ENCODE measurements at regions of chr9 and their contacts with region 1.

Region 1: DNA sequence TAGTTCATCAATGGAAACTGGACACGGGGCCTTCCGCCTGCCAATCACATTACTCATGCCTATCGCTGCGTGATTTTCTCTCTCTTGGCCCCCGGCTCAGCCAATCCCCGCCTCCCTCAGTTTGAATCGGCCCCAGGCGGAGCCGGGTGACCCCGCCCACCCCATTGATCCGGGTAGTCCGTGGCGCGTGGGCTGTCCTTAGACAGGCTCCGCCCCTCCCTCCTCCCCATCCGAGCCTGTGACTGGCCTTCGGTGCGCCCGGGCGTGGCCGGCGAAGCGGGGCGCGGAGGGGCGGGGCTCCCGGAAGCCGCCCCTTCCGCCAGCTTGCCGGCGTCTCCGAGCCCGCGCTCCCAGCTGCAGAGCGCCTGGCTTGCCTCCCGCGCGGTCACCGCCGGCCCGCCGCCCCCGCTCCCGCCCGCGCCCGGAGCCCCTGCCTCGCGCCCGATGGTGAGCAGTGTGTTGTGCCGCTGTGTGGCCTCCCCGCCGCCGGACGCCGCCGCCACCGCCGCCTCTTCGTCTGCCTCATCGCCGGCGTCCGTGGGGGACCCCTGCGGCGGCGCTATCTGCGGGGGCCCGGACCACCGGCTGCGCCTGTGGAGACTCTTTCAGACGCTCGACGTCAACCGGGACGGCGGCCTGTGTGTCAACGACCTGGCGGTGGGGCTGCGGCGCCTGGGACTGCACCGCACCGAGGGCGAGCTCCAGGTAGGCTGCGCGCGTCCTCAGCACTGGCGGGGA is at the start of gene SLC25A25:
- DNase-seq: peak; percentile 96

Region 2: GRCh38 chr9:128055344-128056040 is 12.6 kb before region 1 on chr9:
- CTCF ChIA-PET with region 1: interaction called, 3 read pairs
- POLR2A ChIA-PET with region 1: interaction called, 20 read pairs
- DNase-seq: no peak

Region 3: GRCh38 chr9:128136816-128137793 is 69.1 kb after region 1 on chr9:
- CTCF ChIA-PET with region 1: no interaction called
- POLR2A ChIA-PET with region 1: no interaction called
- DNase-seq: no peak

Measured in HEK293T (cell line).